PC-3 (cell line): ENCODE measurements at regions of chr2 and their contacts with region 1.

Region 1: GRCh38 chr2:197310271-197310985 is at the start of gene ANKRD44:
- DNase-seq: peak; percentile 80
- ATAC-seq: peak; percentile 88
- H3K4me3 ChIP-seq: peak within 1 kb of the TSS; percentile 78
- H3K27ac ChIP-seq: no peak within 1 kb of the TSS
- H3K4me1 ChIP-seq: peaks cover 32% of the 10 kb centered on the region
- H3K27me3 ChIP-seq: no peaks in the 10 kb centered on the region
- CTCF ChIP-seq: 0 out of 2 replicates have a peak, but pooled peaks have one; percentile 7
- total RNA-seq, gene ANKRD44: 2.4 and 28.7 TPM in 2 replicates

Region 2: DNA sequence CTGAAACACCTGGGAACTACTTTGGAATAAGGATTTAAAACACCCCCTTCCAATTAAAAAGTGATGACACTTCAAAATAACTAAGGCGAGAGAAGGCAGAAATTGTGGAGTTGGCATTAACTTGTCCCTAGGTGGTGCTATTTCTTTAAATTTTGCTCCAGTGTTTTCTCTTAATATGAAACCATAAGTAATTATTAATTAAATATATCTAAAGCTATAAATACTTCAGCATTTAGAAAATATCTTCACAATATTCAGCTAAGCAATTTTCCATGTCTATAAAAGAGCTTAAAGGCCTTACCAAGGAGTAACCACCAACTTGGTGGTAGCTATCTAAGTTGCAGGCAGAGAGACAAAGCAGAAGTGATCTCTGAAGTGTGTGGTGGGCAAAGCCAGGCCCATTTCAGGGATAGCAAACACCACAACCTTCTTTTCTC is 197.1 kb before region 1 on chr2:
- CTCF ChIA-PET with region 1: interaction called, 5 read pairs
- POLR2A ChIA-PET with region 1: no interaction called
- intact Hi-C with region 1: loop called (anchors 1 kb)
- DNase-seq: peak; percentile 61
- ATAC-seq: peak; percentile 37; the same call in 1 of the 2 replicates
- H3K4me3 ChIP-seq: no peak overlapping the region
- H3K27ac ChIP-seq: no peak overlapping the region
- H3K4me1 ChIP-seq: peaks cover 4% of the 10 kb centered on the region; the same call in 1 of the 2 replicates
- H3K27me3 ChIP-seq: no peaks in the 10 kb centered on the region
- CTCF ChIP-seq: peak; percentile 71

Region 3: GRCh38 chr2:197130318-197130717 is 180.1 kb before region 1 on chr2:
- CTCF ChIA-PET with region 1: no interaction called
- POLR2A ChIA-PET with region 1: no interaction called
- intact Hi-C with region 1: loop called (anchors 10 kb)
- DNase-seq: no peak
- ATAC-seq: no peak
- H3K4me3 ChIP-seq: no peak overlapping the region
- H3K27ac ChIP-seq: no peak overlapping the region
- H3K4me1 ChIP-seq: no peaks in the 10 kb centered on the region
- H3K27me3 ChIP-seq: no peaks in the 10 kb centered on the region
- CTCF ChIP-seq: no peak

Region 4: GRCh38 chr2:197159661-197160211 is 150.7 kb before region 1 on chr2:
- CTCF ChIA-PET with region 1: no interaction called
- POLR2A ChIA-PET with region 1: no interaction called
- intact Hi-C with region 1: loop called (anchors 1 kb)
- DNase-seq: peak; percentile 92
- ATAC-seq: peak; percentile 89
- H3K4me3 ChIP-seq: peak overlapping the region; percentile 51
- H3K27ac ChIP-seq: peak overlapping the region; percentile 93
- H3K4me1 ChIP-seq: peaks cover 36% of the 10 kb centered on the region
- H3K27me3 ChIP-seq: no peaks in the 10 kb centered on the region
- CTCF ChIP-seq: no peak

Region 5: DNA sequence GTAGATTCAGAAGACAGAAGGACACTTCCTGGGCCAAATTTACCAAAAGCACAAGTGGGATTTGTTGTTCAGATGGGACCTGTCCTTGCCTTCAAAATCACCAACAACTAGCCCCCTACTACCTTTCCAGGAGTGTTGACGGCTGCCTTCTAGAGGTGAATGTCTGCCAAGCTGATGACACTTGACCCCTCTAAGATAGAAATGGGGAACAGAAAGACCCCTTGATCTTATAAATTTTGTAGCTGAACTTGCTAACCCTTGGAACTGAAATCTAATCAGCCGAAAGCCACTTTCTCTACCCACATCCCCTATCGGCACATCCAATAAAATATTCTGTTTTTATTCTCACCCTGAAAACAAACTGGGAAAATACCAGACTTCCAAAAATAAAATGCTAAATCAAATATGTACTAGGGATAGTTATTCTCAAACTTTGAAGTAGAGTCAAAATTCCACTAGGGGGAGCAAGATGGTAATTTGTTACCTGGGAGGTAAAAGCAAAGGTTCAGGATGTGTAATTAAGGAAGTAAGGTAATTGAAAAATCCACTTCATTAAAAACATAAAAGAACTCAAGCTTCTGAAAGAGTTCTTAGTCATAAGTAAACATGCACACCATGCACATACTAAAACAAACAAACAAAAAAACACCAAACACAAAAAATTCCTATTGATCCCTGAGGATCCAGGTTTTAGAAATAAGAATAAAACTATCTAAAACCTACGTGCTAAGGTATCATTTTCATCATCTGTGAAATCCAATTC is 119.1 kb before region 1 on chr2:
- CTCF ChIA-PET with region 1: no interaction called
- POLR2A ChIA-PET with region 1: no interaction called
- intact Hi-C with region 1: loop called (anchors 1 kb)
- DNase-seq: peak; percentile 76
- ATAC-seq: peak; percentile 37
- H3K4me3 ChIP-seq: no peak overlapping the region
- H3K27ac ChIP-seq: no peak overlapping the region
- H3K4me1 ChIP-seq: no peaks in the 10 kb centered on the region
- H3K27me3 ChIP-seq: no peaks in the 10 kb centered on the region
- CTCF ChIP-seq: peak; percentile 88